ENCODE measurements at regions of chr7 and their contacts with region 1.

Region 1: GRCh38 chr7:87895363-87895762 is 19.1 kb downstream of the DBF4 start:
- DNase-seq: no peak
- H3K4me3 Mint-ChIP-seq: no peak overlapping the region
- H3K27ac Mint-ChIP-seq: no peak overlapping the region
- H3K4me1 Mint-ChIP-seq: peaks cover 24% of the 10 kb centered on the region
- H3K27me3 Mint-ChIP-seq: no peaks in the 10 kb centered on the region

Region 2: DNA sequence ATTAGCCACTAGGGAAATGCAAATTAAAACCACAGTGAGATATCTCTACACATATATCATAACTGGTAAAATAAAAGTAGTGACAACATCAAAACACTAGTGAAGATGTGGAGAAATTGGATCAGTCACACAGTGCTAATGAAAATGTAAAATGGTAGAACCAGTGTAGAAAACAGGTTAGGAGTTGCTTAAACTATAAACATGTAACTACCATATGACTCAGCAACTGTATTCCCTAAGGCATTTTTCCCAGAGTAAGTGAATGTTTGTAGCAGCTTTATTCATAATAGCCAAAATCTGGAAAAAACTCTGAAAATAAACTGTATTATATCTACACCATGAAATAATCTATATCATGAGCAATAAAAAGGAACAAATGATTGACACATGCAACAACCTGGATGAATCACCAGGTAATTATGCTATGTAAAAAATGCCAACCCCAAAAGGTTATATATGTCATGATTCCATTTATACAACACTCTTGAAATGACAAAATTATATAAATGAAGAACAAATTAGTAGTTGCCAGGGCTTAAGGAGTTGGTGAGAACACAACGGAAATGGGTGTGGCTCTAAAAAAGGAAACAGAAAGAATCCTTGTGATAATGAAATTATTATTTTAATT is 42.0 kb before region 1 on chr7:
- intact Hi-C with region 1: loop called (anchors 5 kb)
- DNase-seq: no peak
- H3K4me3 Mint-ChIP-seq: no peak overlapping the region
- H3K27ac Mint-ChIP-seq: no peak overlapping the region
- H3K4me1 Mint-ChIP-seq: peaks cover 6% of the 10 kb centered on the region
- H3K27me3 Mint-ChIP-seq: no peaks in the 10 kb centered on the region

Region 3: GRCh38 chr7:88226886-88227516 is 331.6 kb after region 1 on chr7:
- intact Hi-C with region 1: no loop called
- DNase-seq: no peak
- H3K4me3 Mint-ChIP-seq: no peak overlapping the region
- H3K27ac Mint-ChIP-seq: no peak overlapping the region
- H3K4me1 Mint-ChIP-seq: no peaks in the 10 kb centered on the region
- H3K27me3 Mint-ChIP-seq: peaks cover 13% of the 10 kb centered on the region